A673 (cell line): ENCODE measurements at regions of chr14 and their contacts with region 1.

Region 1: DNA sequence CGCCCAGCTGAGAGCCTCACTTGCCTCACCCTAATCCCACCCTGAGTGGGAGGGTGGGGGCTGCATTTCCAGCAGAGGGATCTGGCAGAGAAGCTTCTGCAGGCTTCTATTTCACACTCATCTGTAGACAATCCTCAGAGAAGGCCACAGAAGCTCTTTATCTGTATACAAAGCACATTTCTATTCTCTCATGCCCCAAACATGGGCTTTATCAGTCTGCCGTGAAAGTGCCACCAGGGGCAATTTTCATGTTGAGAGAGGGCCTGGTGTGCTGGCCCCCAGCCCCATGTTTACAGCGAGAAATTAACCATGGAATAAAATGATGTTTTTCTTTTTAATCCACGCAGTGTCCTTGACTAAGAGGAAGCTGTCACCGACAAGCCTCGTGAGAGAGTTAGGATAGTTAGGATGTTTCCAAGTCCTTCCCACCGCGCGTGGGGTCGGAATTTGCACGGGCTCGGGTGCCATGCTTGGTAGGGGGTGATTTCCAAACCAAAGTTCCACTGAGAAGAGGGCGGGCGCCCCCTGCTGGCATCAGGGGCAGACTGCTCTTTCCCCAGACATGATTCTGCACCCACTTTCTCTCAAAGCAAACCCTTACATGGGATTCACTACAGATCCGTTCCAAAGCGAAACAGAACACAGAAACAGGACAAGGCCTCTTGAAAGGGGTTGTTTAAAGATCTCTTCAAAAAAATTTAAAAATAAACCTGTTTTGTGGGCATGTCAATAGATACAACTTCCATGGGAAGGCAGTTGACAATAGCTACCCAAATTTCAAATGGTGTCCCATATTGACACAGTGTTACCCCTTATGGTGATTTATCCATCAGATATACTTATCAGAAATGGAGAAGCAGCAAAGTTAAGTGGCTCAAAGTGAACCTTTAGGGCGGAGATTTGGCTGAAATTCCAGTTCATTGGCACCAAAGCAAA is 19.4 kb downstream of the BDKRB1 start:
- DNase-seq: peak; percentile 77
- H3K4me3 ChIP-seq: no peak overlapping the region
- H3K27ac ChIP-seq: no peak overlapping the region
- H3K4me1 ChIP-seq: no peaks in the 10 kb centered on the region
- H3K27me3 ChIP-seq: no peaks in the 10 kb centered on the region
- CTCF ChIP-seq: peak; percentile 98

Region 2: GRCh38 chr14:95561001-95561412 is 714.4 kb before region 1 on chr14:
- CTCF ChIA-PET with region 1: no interaction called
- POLR2A ChIA-PET with region 1: no interaction called
- intact Hi-C with region 1: loop called (anchors 10 kb)
- DNase-seq: peak; percentile 86
- H3K4me3 ChIP-seq: no peak overlapping the region
- H3K27ac ChIP-seq: no peak overlapping the region
- H3K4me1 ChIP-seq: no peaks in the 10 kb centered on the region
- H3K27me3 ChIP-seq: no peaks in the 10 kb centered on the region
- CTCF ChIP-seq: peak; percentile 98

Region 3: GRCh38 chr14:96001866-96002497 is 273.5 kb before region 1 on chr14:
- CTCF ChIA-PET with region 1: interaction called, 6 read pairs
- POLR2A ChIA-PET with region 1: no interaction called
- intact Hi-C with region 1: loop called (anchors 2 kb)
- DNase-seq: peak; percentile 83
- H3K4me3 ChIP-seq: no peak overlapping the region
- H3K27ac ChIP-seq: no peak overlapping the region
- H3K4me1 ChIP-seq: peaks cover 11% of the 10 kb centered on the region
- H3K27me3 ChIP-seq: no peaks in the 10 kb centered on the region
- CTCF ChIP-seq: no peak

Region 4: DNA sequence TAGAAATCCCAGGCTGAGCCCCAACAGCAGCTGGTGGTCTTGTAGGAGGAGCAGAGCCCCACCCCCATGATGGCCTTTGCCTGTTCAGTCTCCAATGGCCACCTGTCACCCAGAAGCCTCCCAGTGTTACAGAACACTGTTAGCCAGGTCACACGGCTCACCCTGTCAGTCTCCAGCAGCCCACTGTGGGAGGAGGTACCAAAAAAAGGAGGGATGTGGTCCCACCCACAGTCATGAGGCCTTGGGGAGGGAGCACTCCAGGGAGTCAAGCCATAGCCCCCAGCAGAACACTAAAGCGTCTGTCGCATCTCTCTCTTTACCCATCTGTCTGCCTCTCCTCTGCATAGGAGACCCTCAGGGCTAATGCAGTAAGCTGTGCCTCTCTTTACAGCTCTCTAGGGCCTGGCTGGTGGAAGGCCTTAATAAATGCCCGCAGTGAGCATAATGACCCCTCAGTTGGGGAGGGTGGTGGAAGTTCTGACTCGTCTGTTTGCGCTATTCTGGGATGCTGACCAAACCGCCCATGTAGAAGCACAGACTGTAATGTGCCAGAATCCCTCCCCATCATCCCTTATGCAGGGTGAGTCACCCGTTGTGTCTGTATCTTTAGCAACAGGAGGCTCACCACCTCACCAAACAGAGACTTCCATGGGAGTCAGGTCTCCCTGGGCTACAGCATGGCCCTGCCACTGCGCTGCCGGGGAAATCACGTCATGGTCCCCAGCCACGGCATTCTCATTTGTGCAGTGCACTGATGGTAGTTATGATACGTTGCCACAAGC is 221.7 kb before region 1 on chr14:
- CTCF ChIA-PET with region 1: no interaction called
- POLR2A ChIA-PET with region 1: no interaction called
- intact Hi-C with region 1: no loop called
- DNase-seq: no peak
- H3K4me3 ChIP-seq: no peak overlapping the region
- H3K27ac ChIP-seq: no peak overlapping the region
- H3K4me1 ChIP-seq: no peaks in the 10 kb centered on the region
- H3K27me3 ChIP-seq: no peaks in the 10 kb centered on the region
- CTCF ChIP-seq: no peak

Region 5: DNA sequence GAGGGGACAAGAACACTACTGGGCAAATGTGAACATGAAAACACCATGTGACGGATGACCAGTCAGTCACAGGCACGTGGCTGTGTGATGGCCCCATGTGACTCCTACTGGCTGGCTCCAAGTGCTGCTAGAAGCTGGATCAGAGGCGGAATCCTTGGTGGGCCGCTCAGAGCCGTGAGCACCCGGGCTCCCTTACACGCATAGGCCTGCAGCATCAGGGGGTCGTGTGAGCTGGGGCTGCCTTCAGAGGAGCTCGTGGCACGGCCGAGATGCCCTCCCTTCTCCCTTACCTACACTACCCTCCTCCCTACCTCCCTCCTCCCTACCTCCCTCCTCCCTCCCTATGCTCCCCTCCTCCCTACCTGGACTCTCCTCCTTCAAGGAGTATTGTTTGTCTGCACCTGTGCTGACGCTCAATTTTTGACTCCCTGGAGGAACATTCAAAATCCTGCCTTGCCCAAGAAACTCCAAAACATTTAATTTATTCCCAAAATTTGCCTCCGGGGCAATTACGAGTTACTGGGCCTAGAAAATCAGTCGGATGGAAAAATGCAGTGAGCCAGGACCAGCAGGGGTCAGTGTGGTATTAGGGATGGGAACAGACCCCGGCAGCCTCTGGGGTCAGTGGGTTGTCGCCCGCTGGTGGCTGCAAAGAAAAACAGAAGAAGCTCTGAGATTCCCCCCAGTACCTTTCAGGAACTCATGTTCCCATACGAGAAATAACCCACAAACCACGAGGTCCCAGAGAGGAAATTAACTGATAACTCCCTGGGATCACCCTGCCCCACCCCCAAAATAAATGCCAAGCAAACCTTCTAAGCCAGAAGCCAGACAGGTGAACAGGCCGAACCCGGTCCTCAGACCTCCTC is 175.1 kb before region 1 on chr14:
- CTCF ChIA-PET with region 1: interaction called, 16 read pairs
- POLR2A ChIA-PET with region 1: no interaction called
- intact Hi-C with region 1: loop called (anchors 1 kb)
- DNase-seq: peak; percentile 77
- H3K4me3 ChIP-seq: no peak overlapping the region
- H3K27ac ChIP-seq: no peak overlapping the region
- H3K4me1 ChIP-seq: peaks cover 7% of the 10 kb centered on the region
- H3K27me3 ChIP-seq: no peaks in the 10 kb centered on the region
- CTCF ChIP-seq: peak; percentile 95

Region 6: GRCh38 chr14:96287856-96288255 is 12.4 kb after region 1 on chr14:
- CTCF ChIA-PET with region 1: no interaction called
- POLR2A ChIA-PET with region 1: no interaction called
- intact Hi-C with region 1: no loop called
- DNase-seq: no peak
- H3K4me3 ChIP-seq: no peak overlapping the region
- H3K27ac ChIP-seq: no peak overlapping the region
- H3K4me1 ChIP-seq: no peaks in the 10 kb centered on the region
- H3K27me3 ChIP-seq: no peaks in the 10 kb centered on the region
- CTCF ChIP-seq: no peak

Region 7: GRCh38 chr14:96424109-96424989 is 148.9 kb after region 1 on chr14:
- CTCF ChIA-PET with region 1: no interaction called
- POLR2A ChIA-PET with region 1: no interaction called
- intact Hi-C with region 1: loop called (anchors 5 kb)
- DNase-seq: peak; percentile 86
- H3K4me3 ChIP-seq: peak overlapping the region; percentile 30
- H3K27ac ChIP-seq: no peak overlapping the region
- H3K4me1 ChIP-seq: no peaks in the 10 kb centered on the region
- H3K27me3 ChIP-seq: no peaks in the 10 kb centered on the region
- CTCF ChIP-seq: peak; percentile 84